PC-3 (cell line): ENCODE measurements at regions of chr1 and their contacts with region 1.

Region 1: GRCh38 chr1:190137674-190138073 is 340.0 kb downstream of the BRINP3 start:
- DNase-seq: no peak
- ATAC-seq: no peak
- H3K4me3 ChIP-seq: no peak overlapping the region
- H3K27ac ChIP-seq: no peak overlapping the region
- H3K4me1 ChIP-seq: no peaks in the 10 kb centered on the region
- H3K27me3 ChIP-seq: peaks cover 5% of the 10 kb centered on the region; the same call in 1 of the 2 replicates
- CTCF ChIP-seq: no peak

Region 2: DNA sequence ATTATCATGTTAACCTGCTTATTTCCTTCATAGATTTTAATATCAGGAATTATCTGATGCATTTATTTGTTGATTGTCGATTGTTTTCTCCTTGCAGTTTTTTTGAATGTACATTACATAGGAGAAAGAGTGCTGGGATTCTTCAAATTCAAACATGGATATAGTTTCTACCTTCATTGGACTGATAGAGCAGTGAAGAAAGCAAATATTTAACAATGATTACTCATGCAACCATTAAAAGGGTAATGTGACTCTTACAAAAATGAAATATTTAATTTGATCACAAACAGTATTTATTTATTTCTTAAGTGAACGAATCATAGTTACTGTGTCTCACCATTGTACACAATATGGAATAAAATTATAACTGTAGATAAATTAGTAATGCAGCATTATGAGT is 10.9 kb before region 1 on chr1:
- CTCF ChIA-PET with region 1: no interaction called
- POLR2A ChIA-PET with region 1: no interaction called
- intact Hi-C with region 1: loop called (anchors 1 kb)
- DNase-seq: peak; percentile 81
- ATAC-seq: peak; percentile 95
- H3K4me3 ChIP-seq: no peak overlapping the region
- H3K27ac ChIP-seq: no peak overlapping the region
- H3K4me1 ChIP-seq: peaks cover 7% of the 10 kb centered on the region
- H3K27me3 ChIP-seq: no peaks in the 10 kb centered on the region
- CTCF ChIP-seq: no peak

Region 3: DNA sequence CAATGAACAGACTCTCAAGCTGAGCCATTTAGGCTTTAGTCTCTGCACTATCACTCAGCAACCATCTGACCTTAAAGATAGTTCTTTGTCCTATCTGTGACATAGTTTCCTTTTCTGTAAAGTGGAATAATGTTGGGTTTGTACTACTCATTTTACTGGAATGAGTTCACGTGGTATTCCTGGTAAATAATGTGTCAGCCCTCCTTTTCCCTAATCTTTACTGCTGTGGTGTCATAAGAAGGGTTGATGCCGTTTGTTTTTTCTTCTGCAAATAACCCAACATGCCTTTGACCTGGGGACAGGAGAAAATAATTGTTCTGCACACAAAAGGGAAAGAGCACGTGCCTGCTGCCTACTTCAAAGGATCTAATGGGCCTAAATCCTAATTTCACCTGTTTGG is 42.1 kb after region 1 on chr1:
- CTCF ChIA-PET with region 1: no interaction called
- POLR2A ChIA-PET with region 1: no interaction called
- intact Hi-C with region 1: no loop called
- DNase-seq: peak; percentile 81
- ATAC-seq: peak; percentile 97
- H3K4me3 ChIP-seq: no peak overlapping the region
- H3K27ac ChIP-seq: no peak overlapping the region
- H3K4me1 ChIP-seq: peaks cover 9% of the 10 kb centered on the region
- H3K27me3 ChIP-seq: no peaks in the 10 kb centered on the region
- CTCF ChIP-seq: no peak

Region 4: GRCh38 chr1:190367200-190367599 is 229.5 kb after region 1 on chr1:
- CTCF ChIA-PET with region 1: no interaction called
- POLR2A ChIA-PET with region 1: no interaction called
- intact Hi-C with region 1: no loop called
- DNase-seq: no peak
- ATAC-seq: no peak
- H3K4me3 ChIP-seq: no peak overlapping the region
- H3K27ac ChIP-seq: no peak overlapping the region
- H3K4me1 ChIP-seq: no peaks in the 10 kb centered on the region
- H3K27me3 ChIP-seq: peaks cover 7% of the 10 kb centered on the region
- CTCF ChIP-seq: no peak